Tibial artery (tissue), 4 donors: ENCODE measurements at regions of chr15 and their contacts with region 1.

Region 1: GRCh38 chr15:52139599-52140491 is 27.3 kb upstream of the BCL2L10 start:
- DNase-seq: peak; percentile 76 to 82
- H3K4me3 ChIP-seq: no peak overlapping the region
- H3K27ac ChIP-seq: no peak overlapping the region
- H3K4me1 ChIP-seq: peaks cover 0 to 12% (median 4%) of the 10 kb centered on the region in 4 donors
- H3K27me3 ChIP-seq: no peaks in the 10 kb centered on the region
- CTCF ChIP-seq: peak; percentile 71 to 74

Region 2: GRCh38 chr15:51955504-51956101 is 184.2 kb before region 1 on chr15:
- intact Hi-C with region 1: loop called (anchors 10 kb)
- DNase-seq: no peak
- H3K4me3 ChIP-seq: no peak overlapping the region
- H3K27ac ChIP-seq: no peak overlapping the region
- H3K4me1 ChIP-seq: no peaks in the 10 kb centered on the region
- H3K27me3 ChIP-seq: no peaks in the 10 kb centered on the region
- CTCF ChIP-seq: no peak

Region 3: DNA sequence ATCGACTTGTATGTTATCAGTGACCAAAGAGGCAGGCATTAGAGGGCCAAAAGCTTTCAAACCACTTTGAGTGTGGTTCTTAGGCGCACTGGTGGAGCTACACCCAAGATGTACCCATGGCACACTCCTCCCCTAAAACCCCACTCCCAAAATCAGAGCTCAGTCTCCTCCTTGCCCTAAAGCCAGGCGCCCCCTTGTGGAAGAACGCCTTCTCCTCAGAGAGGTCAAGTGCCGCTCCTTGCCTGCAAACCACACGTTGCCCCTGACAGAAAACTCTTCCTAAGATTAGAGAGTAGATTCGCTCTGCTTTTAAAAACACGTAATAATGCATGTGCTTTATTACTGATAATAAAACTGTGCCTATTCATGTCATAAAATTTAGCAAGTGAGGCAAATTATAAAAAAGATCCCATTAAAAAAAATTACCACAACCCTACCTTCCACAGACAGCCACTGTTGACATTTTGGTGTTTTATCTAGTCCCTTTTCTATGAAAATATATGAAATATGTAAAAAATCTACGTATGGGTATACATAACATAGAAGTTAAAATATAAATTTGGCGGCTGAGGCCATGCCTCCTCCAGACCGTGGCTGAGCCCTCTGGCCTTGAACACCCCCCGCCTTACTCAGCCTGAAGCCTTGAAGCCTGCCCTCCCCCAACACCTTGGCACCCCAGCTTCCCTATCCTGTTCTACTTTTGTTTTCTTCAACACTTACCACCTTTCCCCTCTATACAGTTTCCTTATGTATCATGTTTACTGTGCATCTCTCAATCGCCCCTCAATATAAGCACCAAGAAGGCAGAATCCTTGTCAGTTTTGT is 60.8 kb before region 1 on chr15:
- intact Hi-C with region 1: loop called (anchors 10 kb)
- DNase-seq: peak; percentile 78 to 81
- H3K4me3 ChIP-seq: no peak overlapping the region
- H3K27ac ChIP-seq: no peak overlapping the region
- H3K4me1 ChIP-seq: no peaks in the 10 kb centered on the region
- H3K27me3 ChIP-seq: no peaks in the 10 kb centered on the region
- CTCF ChIP-seq: peak; percentile 66 to 68

Region 4: DNA sequence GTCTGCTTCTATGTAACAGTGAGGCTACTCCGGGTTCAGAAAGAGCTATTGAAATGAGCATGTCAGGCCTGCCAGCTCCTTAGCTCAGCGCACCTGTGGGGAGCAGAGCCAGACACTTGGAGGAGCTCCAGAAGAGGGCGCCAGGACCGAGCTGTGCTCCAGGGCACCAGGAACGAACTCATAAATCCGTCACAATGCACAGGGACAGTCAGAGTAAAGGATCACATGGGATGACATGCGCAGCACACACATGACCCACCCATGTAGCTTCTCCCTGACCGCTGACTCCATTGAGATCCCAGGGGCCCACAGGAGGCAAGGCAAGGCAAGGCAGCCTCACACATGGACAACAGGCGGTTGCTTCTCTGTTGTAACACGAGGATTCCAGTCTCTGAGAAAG is 77.3 kb after region 1 on chr15:
- intact Hi-C with region 1: no loop called
- DNase-seq: no peak
- H3K4me3 ChIP-seq: no peak overlapping the region
- H3K27ac ChIP-seq: no peak overlapping the region
- H3K4me1 ChIP-seq: no peaks in the 10 kb centered on the region
- H3K27me3 ChIP-seq: no peaks in the 10 kb centered on the region
- CTCF ChIP-seq: no peak

Region 5: DNA sequence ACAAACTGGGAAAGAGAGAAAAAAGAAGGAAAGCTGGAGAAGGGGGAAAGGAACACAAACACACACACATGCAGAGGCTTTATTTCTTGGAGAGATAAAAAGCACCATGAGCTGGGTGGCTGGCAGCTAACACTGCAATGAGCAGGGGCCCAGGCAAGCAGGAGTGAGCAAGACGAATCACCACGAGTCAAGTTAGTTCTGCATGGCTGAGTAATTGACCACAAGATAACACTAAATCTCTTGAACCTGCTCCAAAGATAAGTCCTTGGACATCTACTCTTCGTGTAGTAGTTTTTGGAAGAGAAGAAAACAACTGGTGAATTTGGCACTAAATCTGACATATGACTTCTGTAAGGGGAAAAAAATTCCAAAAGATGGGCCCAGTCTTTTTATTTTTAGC is 288.0 kb after region 1 on chr15:
- intact Hi-C with region 1: no loop called
- DNase-seq: peak in 1 of 2 donors; percentile 48
- H3K4me3 ChIP-seq: no peak overlapping the region
- H3K27ac ChIP-seq: no peak overlapping the region
- H3K4me1 ChIP-seq: peaks cover 0 to 5% (median 0%) of the 10 kb centered on the region in 4 donors
- H3K27me3 ChIP-seq: no peaks in the 10 kb centered on the region
- CTCF ChIP-seq: no peak